Heart right ventricle (tissue), 16 donors: ENCODE measurements at regions of chr2 and their contacts with region 1.

Region 1: DNA sequence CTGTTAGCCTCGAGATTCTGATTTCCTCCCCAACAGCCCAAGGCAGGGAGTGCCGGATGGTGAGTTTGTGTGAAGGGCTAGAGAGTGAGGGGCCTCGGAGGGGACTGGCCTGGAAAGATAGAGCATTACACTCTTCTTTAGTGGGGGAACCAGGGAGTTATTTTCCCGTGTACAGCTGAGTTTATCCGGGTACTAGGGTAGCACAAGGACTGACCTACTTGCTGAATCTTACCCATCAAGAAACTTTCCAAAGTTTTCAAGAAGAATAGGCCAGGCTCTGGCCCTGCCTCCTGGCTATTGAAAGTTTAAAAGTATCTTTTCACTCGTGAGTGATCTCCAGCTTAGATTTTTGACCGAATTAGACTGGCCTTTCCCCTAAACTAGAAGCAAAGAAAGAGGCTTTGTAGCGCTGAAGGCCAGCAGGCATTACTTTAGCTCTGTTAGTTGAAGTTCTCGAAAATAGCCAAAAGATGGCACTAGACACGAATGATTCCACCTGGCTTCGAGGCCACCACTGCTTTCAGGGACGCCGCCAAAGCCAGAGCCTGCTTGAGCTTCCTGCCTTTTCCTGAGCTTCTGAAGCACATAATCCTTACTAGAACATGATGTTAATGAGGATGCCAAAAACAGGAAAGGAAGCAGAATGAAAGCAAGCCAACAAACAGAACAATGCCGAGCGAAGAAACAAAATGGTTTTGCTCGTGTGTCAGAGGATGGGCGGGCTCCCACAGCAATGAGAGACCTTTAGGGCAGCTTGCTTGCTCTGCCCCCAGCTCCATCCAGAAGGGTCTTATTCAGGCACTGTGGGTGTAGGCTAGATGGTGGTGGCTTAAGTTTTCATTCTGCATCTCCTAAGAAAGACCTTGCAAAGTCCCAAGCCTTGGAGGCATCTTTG is 55.8 kb downstream of the TSN start:
- DNase-seq: peak; percentile 55 to 72
- ATAC-seq: peak; percentile 69 to 94 (median 90)
- H3K4me3 ChIP-seq: no peak overlapping the region
- H3K27ac ChIP-seq: peak overlapping the region in 5 of 10 donors; percentile 10 to 53 (median 23)
- H3K4me1 ChIP-seq: peaks cover 0 to 10% (median 5%) of the 10 kb centered on the region in 9 donors
- H3K27me3 ChIP-seq: peaks cover 0 to 3% (median 0%) of the 10 kb centered on the region in 7 donors
- CTCF ChIP-seq: peak; percentile 22 to 76 (median 64)

Region 2: GRCh38 chr2:121969166-121969565 is 158.0 kb after region 1 on chr2:
- intact Hi-C with region 1: loop called in 3 of 10 experiments (anchors 10 kb)
- DNase-seq: peak in 1 of 2 donors; percentile 42
- ATAC-seq: peak; percentile 79 to 92 (median 86)
- H3K4me3 ChIP-seq: peak overlapping the region in 2 of 10 donors; percentile 2 to 5
- H3K27ac ChIP-seq: peak overlapping the region; percentile 24 to 67 (median 60)
- H3K4me1 ChIP-seq: peaks cover 0 to 26% (median 6%) of the 10 kb centered on the region in 9 donors
- H3K27me3 ChIP-seq: peaks cover 0 to 30% (median 4%) of the 10 kb centered on the region in 7 donors
- CTCF ChIP-seq: no peak